Dorsolateral prefrontal cortex (tissue), 120 donors: ENCODE measurements at regions of chr20 and their contacts with region 1.

Region 1: DNA sequence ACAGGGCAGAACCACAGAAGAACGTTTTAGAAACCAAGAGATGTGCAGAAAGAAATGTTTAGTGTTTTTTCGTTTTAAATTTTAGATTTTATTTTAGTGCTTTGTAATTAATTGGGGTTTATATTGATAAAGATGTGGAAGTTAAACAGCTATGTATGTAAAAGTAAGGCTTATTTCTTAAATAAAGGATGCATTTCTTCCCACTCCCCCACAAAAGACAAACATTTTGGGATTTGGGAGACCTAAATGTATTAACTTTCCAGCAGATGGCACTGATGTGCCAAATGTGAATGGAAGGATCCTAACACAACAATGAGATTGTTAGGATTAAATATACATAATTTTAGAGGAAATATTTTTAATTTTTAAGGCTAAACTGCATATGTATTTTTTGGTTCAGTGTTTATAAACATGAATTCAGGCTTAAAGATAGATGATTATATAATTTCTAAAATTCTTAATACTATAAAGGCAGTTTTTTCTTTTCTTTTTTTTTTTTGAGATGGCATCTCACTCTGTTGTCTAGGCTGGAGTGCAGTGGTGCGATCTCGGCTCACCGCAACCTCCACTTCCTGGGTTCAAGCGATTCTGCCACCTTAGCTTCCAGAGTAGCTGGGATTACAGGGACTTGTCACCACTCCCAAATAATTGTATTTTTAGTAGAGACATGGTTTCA is 12.0 kb downstream of the PFDN4 start:
- DNase-seq: peak in 1 of 10 donors; percentile 11
- H3K4me3 ChIP-seq: no peak overlapping the region
- H3K27ac ChIP-seq: no peak overlapping the region
- H3K27me3 ChIP-seq: no peaks in the 10 kb centered on the region
- CTCF ChIP-seq: peak in 55 of 56 donors; percentile 42 to 82 (median 65)

Region 2: DNA sequence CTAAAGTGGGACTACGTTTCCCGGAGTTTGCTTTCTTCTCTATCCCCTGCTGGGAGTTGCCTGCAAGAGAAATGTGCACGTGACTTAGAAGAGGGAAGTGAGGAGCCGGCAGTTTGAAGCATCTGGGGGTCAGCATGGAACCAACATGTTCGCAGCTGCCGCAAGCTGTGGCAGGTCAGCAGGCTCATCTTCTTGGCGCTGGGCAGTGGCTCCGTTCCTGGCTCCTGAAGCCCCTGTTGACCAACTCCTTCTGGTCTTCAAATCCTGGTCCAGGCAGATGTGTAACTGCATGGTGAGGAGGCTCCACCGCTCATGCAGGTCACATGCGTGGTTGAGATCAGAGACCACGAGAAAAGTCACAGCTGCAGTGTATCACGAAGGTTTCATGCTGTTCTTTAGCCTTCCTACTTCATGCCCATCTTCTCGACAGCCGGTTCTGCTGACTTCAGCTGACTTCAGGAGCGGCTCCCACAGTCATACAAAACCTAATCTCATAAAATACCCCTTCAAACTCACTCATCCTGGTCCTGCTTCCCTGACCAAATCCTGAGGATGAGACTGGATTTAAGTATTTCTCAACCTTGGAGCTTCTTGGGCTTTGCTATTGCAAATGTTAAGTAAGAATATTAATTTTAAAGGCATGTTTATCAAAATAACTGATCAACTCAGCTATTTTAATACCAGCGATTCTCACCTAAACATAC is 104.6 kb before region 1 on chr20:
- intact Hi-C with region 1: no loop called
- DNase-seq: no peak
- H3K4me3 ChIP-seq: no peak overlapping the region
- H3K27ac ChIP-seq: no peak overlapping the region
- H3K27me3 ChIP-seq: peaks cover 0 to 20% (median 0%) of the 10 kb centered on the region in 45 donors
- CTCF ChIP-seq: no peak

Region 3: DNA sequence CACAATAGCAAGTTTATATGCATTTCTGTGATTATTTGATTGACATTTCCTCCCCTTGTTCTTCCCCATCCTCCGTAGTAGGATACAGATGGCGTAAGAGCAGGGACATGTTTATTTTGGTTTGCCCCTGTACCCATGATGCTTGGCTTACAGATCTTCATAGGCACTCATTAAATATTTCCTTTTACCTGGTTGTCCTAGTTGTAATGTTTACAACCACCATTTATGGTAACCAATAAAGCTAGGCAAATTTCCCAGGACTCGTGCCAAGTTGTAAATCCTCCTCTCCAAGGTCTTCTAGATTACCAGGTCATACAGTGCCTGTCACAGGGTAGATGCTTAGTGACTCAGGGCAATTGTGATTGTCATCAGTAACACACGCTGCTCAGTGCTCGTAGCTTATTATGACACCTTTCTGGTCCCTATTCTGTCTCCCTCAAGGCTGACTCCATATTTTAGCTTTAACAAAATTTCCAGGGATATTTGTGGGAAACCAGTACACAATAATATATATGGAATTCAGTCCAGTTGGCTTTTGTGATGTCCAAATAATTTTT is 70.9 kb before region 1 on chr20:
- intact Hi-C with region 1: no loop called
- DNase-seq: no peak
- H3K4me3 ChIP-seq: no peak overlapping the region
- H3K27ac ChIP-seq: no peak overlapping the region
- H3K27me3 ChIP-seq: peaks cover 0 to 13% (median 0%) of the 10 kb centered on the region in 45 donors
- CTCF ChIP-seq: no peak

Region 4: GRCh38 chr20:54475334-54476168 is 255.7 kb after region 1 on chr20 and contains the start of gene DOK5:
- intact Hi-C with region 1: loop called in 1 of 2 experiments (anchors 5 kb)
- DNase-seq: peak in 7 of 10 donors; percentile 39 to 76 (median 60)
- H3K4me3 ChIP-seq: peak within 1 kb of the TSS; percentile 27 to 80 (median 65)
- H3K27ac ChIP-seq: peak within 1 kb of the TSS in 42 of 59 donors; percentile 16 to 79 (median 64)
- H3K27me3 ChIP-seq: peaks cover 0 to 62% (median 6%) of the 10 kb centered on the region in 45 donors
- CTCF ChIP-seq: peak in 3 of 56 donors; percentile 4 to 11 (median 6)
- total RNA-seq, gene DOK5: 7.7 to 33.3 (median 15.9) TPM

Region 5: DNA sequence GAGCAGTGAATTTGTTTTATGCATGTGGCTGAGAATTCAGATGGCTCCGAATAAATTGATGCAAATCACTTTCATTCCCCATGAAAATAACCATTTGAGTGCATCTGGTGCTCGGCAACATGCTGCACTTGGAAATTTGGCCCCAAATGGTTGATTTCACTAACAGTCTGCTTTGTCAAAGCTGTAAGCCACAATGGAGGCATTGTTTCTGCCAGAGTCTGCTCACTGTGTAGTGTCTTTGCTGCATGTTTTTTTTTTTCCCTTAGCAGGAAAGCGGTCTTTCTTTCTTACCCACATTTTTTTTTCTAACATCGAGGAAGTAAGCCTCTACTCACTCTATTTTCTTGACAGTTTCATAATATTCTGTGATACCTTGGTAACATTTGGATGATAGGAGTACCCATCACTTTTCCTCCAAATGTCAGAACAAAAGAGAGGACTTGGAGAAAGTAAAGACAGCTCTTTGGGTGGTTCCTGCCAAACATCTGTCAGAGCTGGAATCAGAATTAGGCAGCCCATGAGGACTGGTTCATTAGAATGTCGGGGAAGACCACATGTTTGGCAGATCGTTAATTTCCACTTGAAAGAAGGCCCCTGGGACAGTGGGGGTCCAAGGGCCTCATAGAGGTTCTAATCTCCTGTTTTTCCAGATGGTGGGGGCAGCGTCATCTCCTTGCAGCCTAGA is 405.0 kb after region 1 on chr20:
- intact Hi-C with region 1: loop called in 1 of 2 experiments (anchors 5 kb)
- DNase-seq: peak in 6 of 10 donors; percentile 41 to 80 (median 54)
- H3K4me3 ChIP-seq: peak overlapping the region in 30 of 59 donors; percentile 1 to 51 (median 22)
- H3K27ac ChIP-seq: peak overlapping the region in 35 of 59 donors; percentile 1 to 68 (median 44)
- H3K27me3 ChIP-seq: peaks cover 0 to 34% (median 0%) of the 10 kb centered on the region in 45 donors
- CTCF ChIP-seq: peak in 22 of 56 donors; percentile 9 to 50 (median 23)

Region 6: DNA sequence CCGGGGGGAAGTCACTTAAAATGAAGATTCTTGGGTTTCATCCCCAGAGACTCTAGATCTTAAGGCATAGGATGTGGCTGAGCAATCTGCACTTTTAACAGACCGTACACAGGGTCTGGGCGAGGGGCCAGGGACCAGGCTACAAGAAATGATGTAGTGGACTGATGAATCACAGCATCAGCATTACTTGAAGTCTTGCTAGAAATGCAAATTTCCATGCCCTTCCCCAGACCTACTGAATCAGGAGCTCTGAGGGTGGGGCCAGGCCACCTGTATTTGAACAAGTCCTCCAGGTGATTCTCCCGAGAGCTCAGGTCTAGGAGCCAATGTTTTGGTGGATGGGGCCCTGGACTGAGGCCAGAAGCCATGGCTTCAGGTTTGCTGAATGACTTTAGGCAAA is 423.9 kb after region 1 on chr20:
- intact Hi-C with region 1: loop called (anchors 2 to 5 kb)
- DNase-seq: no peak
- H3K4me3 ChIP-seq: no peak overlapping the region
- H3K27ac ChIP-seq: no peak overlapping the region
- H3K27me3 ChIP-seq: peaks cover 0 to 5% (median 0%) of the 10 kb centered on the region in 45 donors
- CTCF ChIP-seq: no peak